ENCODE measurements at regions of chr5 and their contacts with region 1.

Region 1: DNA sequence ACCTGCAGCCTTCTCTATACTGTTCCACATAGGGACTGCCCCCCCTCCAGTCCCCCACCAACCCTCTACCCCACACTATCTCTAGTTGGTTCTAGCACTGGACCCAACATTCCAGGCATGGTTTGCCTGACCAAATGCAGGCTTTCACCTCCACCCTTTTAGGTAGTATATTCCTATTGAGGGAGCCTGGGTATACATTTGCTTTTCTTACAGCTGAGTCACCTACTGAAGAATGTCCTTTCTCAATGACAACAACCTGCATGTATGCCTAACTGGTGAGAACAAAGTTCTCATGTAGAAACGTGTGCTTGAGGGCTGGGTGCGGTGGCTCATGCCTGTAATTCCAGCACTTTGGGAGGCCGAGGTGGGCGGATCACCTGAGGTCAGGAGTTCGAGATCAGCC is 8.2 kb downstream of the TNIP1 start:
- DNase-seq: no peak
- H3K4me3 ChIP-seq: no peak overlapping the region
- H3K27ac ChIP-seq: no peak overlapping the region
- H3K4me1 ChIP-seq: peaks cover 17% of the 10 kb centered on the region
- H3K27me3 ChIP-seq: no peaks in the 10 kb centered on the region
- CTCF ChIP-seq: no peak
- EP300 ChIP-seq: no peak
- POLR2A ChIP-seq: no peak

Region 2: GRCh38 chr5:151093476-151093889 is 20.9 kb after region 1 on chr5:
- intact Hi-C with region 1: loop called in 1 of 4 experiments (anchors 2 kb)
- DNase-seq: no peak
- H3K4me3 ChIP-seq: no peak overlapping the region
- H3K27ac ChIP-seq: peak overlapping the region in 1 of 2 donors; percentile 55
- H3K4me1 ChIP-seq: peaks cover 20% of the 10 kb centered on the region
- H3K27me3 ChIP-seq: no peaks in the 10 kb centered on the region
- CTCF ChIP-seq: no peak
- EP300 ChIP-seq: no peak
- POLR2A ChIP-seq: no peak

Region 3: DNA sequence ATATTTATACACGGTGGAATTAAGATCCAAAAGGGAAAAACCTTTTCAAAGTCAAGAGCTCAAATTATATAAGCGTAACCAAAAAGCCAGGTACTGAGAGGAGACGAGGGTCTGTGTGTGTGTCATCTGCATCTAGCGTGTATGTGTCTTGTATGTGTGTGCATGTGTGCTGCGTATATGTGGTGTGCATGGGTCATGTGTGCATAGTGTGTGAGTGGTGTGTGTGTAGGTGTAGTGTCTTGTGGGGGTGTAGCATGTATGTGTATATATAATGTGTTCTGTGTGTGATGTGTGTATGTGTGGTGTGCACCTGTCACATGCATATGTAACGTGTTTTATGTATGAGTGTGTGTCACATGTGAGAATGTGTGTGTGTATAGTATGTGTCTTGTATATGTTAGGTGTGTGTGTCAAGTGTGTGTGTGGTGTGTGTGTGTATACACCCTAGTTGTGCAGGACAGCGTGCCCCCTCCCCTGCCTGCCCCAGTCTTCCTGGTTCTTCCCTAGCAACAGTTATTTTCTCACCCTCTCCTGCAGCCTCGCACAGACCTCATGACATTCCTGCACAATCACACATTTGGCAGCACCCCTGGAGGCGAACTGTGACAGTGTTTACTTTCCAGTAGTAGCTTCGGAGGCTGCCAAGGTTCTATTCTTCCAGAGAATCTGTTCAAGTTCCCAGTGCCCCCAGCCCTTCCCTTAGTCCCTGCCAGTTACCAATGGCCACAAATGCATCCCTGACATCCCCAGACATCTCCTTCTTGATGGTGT is 35.3 kb after region 1 on chr5:
- intact Hi-C with region 1: loop called in 1 of 4 experiments (anchors 5 kb)
- DNase-seq: no peak
- H3K4me3 ChIP-seq: no peak overlapping the region
- H3K27ac ChIP-seq: no peak overlapping the region
- H3K4me1 ChIP-seq: peaks cover 18% of the 10 kb centered on the region
- H3K27me3 ChIP-seq: no peaks in the 10 kb centered on the region
- CTCF ChIP-seq: no peak
- EP300 ChIP-seq: no peak
- POLR2A ChIP-seq: no peak

Region 4: GRCh38 chr5:151264113-151264512 is 191.5 kb after region 1 on chr5:
- intact Hi-C with region 1: no loop called
- DNase-seq: no peak
- H3K4me3 ChIP-seq: no peak overlapping the region
- H3K27ac ChIP-seq: no peak overlapping the region
- H3K4me1 ChIP-seq: no peaks in the 10 kb centered on the region
- H3K27me3 ChIP-seq: no peaks in the 10 kb centered on the region
- CTCF ChIP-seq: no peak
- EP300 ChIP-seq: no peak
- POLR2A ChIP-seq: no peak